Right cardiac atrium (tissue), 5 donors: ENCODE measurements at regions of chr9 and their contacts with region 1.

Region 1: GRCh38 chr9:112705768-112706427 is 12.0 kb downstream of the INIP start:
- DNase-seq: no peak
- ATAC-seq: peak; percentile 48 to 59
- H3K4me3 ChIP-seq: no peak overlapping the region
- H3K27ac ChIP-seq: no peak overlapping the region
- H3K4me1 ChIP-seq: no peaks in the 10 kb centered on the region
- H3K27me3 ChIP-seq: no peaks in the 10 kb centered on the region

Region 2: DNA sequence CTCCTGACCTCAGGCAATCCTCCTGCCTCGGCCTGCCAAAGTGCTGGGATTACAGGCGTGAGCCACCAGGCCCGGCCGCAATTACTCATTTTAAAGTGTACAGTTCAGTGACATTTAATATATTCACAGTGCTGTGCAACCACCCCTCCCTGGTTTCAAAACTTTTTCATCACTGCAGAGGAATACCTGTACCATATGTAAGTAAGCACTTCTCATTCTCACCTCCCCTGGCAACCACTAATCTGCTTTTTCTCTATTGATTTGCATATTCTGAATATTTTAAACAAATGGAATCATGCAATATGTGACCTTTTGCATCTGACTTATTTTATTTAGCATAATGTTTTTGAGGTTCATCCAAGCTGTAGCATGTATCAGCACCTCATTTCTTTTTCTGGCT is 240.5 kb before region 1 on chr9:
- intact Hi-C with region 1: loop called in 1 of 4 experiments (anchors 10 kb)
- DNase-seq: no peak
- ATAC-seq: no peak
- H3K4me3 ChIP-seq: no peak overlapping the region
- H3K27ac ChIP-seq: no peak overlapping the region
- H3K4me1 ChIP-seq: no peaks in the 10 kb centered on the region
- H3K27me3 ChIP-seq: no peaks in the 10 kb centered on the region

Region 3: GRCh38 chr9:112486221-112487007 is 219.5 kb before region 1 on chr9 and contains the start of gene KIAA1958:
- intact Hi-C with region 1: loop called in 1 of 4 experiments (anchors 10 kb)
- DNase-seq: peak; percentile 88 to 95 (median 93)
- ATAC-seq: peak; percentile 94 to 96
- H3K4me3 ChIP-seq: peak within 1 kb of the TSS; percentile 96
- H3K27ac ChIP-seq: peak within 1 kb of the TSS; percentile 25
- H3K4me1 ChIP-seq: no peaks in the 10 kb centered on the region
- H3K27me3 ChIP-seq: no peaks in the 10 kb centered on the region
- total RNA-seq, gene KIAA1958: 3.1 to 4.4 (median 3.7) TPM